OCI-LY7 (cell line): ENCODE measurements at regions of chr7 and their contacts with region 1.

Region 1: GRCh38 chr7:74365322-74366022 is 76.3 kb downstream of the CLIP2 start:
- DNase-seq: peak; percentile 75
- H3K4me3 ChIP-seq: no peak overlapping the region
- H3K27ac ChIP-seq: no peak overlapping the region
- H3K4me1 ChIP-seq: peaks cover 11% of the 10 kb centered on the region
- CTCF ChIP-seq: no peak

Region 2: DNA sequence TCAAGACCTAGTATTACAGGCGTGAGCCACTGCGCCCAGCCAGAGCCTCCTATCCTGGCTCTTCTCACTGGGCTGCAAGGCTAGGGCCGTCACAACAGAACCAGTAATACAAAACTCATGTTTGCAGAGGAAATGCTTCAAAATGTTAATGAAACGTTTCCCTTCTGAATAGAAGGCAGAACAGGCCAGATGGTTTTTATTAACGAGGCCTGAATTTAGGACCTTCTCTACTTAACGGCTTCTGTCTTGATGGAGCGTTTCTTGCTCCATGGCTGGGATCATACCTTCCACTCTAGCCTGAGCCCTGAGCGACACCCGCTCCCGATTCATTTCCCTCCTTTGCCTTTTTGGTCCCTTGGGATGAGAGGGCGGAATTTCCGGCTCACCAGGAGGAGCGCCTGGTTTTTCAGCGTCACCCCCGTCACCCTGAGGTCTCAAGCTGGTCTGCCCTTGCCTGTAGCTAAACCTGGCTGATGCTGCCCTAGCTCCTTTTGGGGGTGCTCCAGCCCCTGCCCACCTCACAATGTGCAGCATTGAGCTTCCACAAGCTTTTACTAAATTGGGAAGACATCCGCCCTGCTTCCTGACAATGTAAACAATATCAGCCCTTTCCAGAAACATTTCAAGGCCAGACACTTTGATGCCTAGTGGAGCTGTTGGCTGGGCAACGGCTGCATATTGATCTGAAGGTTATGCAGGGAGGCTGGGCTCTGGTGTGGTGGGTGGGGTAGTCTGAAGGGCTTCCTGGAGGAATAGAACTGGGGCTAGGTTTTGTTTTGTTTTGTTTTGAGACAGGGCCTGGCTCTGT is 71.1 kb before region 1 on chr7:
- CTCF ChIA-PET with region 1: interaction called, 10 read pairs
- POLR2A ChIA-PET with region 1: interaction called, 10 read pairs
- intact Hi-C with region 1: no loop called
- DNase-seq: no peak
- H3K4me3 ChIP-seq: no peak overlapping the region
- H3K27ac ChIP-seq: no peak overlapping the region
- H3K4me1 ChIP-seq: peaks cover 17% of the 10 kb centered on the region
- CTCF ChIP-seq: no peak

Region 3: DNA sequence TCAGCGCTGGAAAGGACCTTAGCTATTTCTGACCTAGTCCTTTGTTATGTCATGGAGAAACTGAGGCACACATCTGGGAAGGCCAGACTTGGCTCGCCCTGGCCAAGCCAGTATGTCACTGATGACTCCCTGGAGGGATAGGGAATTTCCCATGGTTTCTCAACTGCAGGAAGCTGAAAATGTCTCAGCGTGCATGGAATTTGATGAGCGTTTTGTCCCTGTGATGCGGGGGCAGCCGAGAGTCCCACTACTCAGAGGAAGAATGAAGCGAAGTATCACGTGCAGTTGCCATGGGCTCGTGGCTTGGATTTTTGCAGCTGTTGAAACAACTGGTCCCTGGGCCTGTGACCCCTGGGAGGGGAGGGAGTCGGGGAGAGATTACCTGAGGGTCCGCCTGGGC is 31.4 kb before region 1 on chr7:
- CTCF ChIA-PET with region 1: no interaction called
- POLR2A ChIA-PET with region 1: no interaction called
- intact Hi-C with region 1: no loop called
- DNase-seq: no peak
- H3K4me3 ChIP-seq: no peak overlapping the region
- H3K27ac ChIP-seq: no peak overlapping the region
- H3K4me1 ChIP-seq: peaks cover 10% of the 10 kb centered on the region
- CTCF ChIP-seq: no peak